ENCODE measurements at regions of chr7 and their contacts with region 1.

Region 1: GRCh38 chr7:30322271-30323005 is 38.0 kb downstream of the ZNRF2 start:
- DNase-seq: peak; percentile 40
- H3K4me3 Mint-ChIP-seq: peak overlapping the region; percentile 78
- H3K27ac Mint-ChIP-seq: peak overlapping the region; percentile 92
- H3K4me1 Mint-ChIP-seq: peaks cover 62% of the 10 kb centered on the region
- H3K27me3 Mint-ChIP-seq: no peaks in the 10 kb centered on the region

Region 2: GRCh38 chr7:30308389-30308788 is 14.0 kb before region 1 on chr7:
- CTCF ChIA-PET with region 1: interaction called, 8 read pairs
- intact Hi-C with region 1: loop called (anchors 1 kb)
- DNase-seq: no peak
- H3K4me3 Mint-ChIP-seq: no peak overlapping the region
- H3K27ac Mint-ChIP-seq: no peak overlapping the region
- H3K4me1 Mint-ChIP-seq: peaks cover 54% of the 10 kb centered on the region
- H3K27me3 Mint-ChIP-seq: no peaks in the 10 kb centered on the region

Measured in activated naive CD4-positive, alpha-beta T cell treated with anti-CD3 and anti-CD28 coated beads for 36 hours (primary cell).